ENCODE measurements at regions of chr9 and their contacts with region 1.

Region 1: GRCh38 chr9:134698587-134699342 is 57.2 kb downstream of the COL5A1 start:
- DNase-seq: peak; percentile 24
- H3K4me3 Mint-ChIP-seq: no peak overlapping the region
- H3K27ac Mint-ChIP-seq: no peak overlapping the region
- H3K4me1 Mint-ChIP-seq: no peaks in the 10 kb centered on the region
- H3K27me3 Mint-ChIP-seq: no peaks in the 10 kb centered on the region

Region 2: GRCh38 chr9:134738869-134739659 is 40.3 kb after region 1 on chr9:
- intact Hi-C with region 1: loop called (anchors 1 kb)
- DNase-seq: no peak
- H3K4me3 Mint-ChIP-seq: no peak overlapping the region
- H3K27ac Mint-ChIP-seq: no peak overlapping the region
- H3K4me1 Mint-ChIP-seq: no peaks in the 10 kb centered on the region
- H3K27me3 Mint-ChIP-seq: no peaks in the 10 kb centered on the region

Region 3: DNA sequence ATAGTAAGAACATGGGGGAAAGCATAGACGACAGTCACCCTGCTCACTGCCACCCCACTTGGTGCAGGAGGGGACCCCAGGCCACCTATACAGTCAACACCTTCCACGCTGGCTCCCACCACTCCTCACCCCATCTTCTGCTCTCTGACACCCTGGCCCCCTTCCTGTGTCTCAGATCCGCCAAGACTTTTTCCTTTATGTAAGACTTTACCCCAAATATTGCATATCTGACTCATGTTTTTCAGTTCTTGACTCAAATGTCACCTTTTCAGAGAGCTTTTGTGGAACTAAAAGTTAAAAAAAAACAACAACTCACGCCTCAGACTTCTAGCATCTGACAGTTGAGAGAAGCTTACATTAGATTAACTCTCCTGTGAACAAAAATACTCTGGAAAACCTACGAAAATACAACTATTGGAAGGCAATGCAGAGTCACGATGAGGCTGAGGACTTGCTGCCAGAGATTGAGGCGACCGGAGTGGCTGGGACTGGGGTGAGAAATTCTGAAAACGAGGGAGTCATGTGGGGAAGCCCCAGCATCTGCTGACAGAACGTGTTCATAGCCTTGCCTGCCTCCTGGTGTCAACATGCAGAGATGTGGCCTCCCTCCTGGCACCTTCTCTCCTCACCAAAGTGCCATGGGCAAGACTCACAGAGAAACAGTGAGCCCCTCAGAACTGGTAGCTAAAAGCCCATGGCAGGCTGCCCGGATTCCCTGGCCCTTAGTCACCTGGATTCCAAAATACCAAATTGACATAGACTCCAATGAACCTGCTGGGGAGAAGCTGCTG is 159.5 kb after region 1 on chr9:
- intact Hi-C with region 1: loop called (anchors 1 kb)
- DNase-seq: peak; percentile 8
- H3K4me3 Mint-ChIP-seq: peak overlapping the region; percentile 40
- H3K27ac Mint-ChIP-seq: peak overlapping the region; percentile 86
- H3K4me1 Mint-ChIP-seq: peaks cover 10% of the 10 kb centered on the region
- H3K27me3 Mint-ChIP-seq: no peaks in the 10 kb centered on the region